Activated T-helper 1 cell treated with anti-CD3 and anti-CD28 coated beads, Interleukin-12 subunit alpha, Interleukin-12 subunit beta, Interleukin-2, Interleukin-4 antibody, amounts not matched to agents 30 ng/mL and 10 ng/mL and 1 ng/mL, durations not matched to agents 14 hours and 24 hours and 36 hours (primary cell): ENCODE measurements at regions of chr3 and their contacts with region 1.

Region 1: DNA sequence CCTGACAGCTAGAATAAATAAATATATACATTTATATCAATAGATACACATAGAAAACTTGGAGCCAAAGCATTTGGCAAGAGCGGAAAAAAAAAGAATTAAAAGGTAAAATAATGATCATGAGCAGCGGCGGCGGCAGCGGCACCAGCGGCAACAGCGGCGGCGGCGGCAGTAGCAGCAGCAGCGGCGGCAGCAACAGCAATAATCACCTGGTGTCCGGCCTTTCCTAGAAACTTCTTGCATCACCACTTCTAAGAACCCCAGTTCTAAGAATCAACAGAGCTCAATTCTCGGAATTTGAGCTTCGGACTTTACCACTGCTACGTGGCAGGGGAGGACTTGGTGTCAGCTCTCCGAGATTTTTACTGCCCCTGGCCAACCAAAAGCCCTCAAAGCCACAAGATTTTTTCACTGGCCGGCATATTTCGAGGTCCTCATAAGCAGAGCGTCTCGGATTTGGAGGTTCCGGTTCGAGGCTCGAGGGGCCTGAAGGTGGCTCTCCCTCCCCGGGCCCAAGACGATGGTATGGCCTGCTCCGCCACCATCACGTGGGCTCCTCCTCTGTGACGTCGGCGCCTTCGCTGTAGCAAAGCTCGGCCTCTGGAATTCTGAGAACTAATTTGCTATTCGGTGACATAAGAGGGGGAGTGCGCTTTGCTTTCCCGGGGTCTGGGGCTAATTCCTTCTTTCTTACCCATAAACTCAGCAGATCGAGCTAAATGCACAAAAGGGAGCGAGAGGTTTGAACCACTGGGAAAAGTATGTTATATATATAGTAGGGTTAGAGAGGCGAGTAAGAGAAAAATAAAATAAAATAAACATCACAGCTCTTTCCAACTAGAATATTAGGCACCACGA is at the start of gene BCL6:
- DNase-seq: peak; percentile 88
- H3K4me3 Mint-ChIP-seq: peak within 1 kb of the TSS; percentile 96
- H3K27ac Mint-ChIP-seq: peak within 1 kb of the TSS; percentile 98
- H3K4me1 Mint-ChIP-seq: peaks cover 73% of the 10 kb centered on the region
- H3K27me3 Mint-ChIP-seq: no peaks in the 10 kb centered on the region
- total RNA-seq, gene BCL6: 38.8 and 42.1 TPM in 2 replicates

Region 2: DNA sequence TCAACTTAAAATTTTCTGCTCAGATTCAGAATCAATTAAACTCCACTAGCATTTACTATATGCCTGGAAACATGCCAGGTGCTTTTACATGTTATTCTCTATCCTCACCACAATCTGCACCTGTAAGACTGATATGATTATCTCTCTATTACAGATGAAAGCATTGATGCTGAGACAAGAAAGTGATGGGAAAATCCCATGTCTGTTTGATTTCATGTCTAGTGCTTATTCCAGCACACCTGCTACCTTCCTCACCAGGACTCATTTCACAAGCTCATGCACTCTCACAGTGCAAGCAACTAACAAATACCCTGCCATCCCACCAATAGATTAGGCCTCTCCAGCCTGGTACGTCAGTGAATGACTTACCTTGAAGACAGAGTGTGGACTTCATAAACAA is 24.8 kb after region 1 on chr3:
- intact Hi-C with region 1: loop called (anchors 1 kb)
- DNase-seq: no peak
- H3K4me3 Mint-ChIP-seq: peak overlapping the region; percentile 12
- H3K27ac Mint-ChIP-seq: peak overlapping the region; percentile 16
- H3K4me1 Mint-ChIP-seq: peaks cover 56% of the 10 kb centered on the region
- H3K27me3 Mint-ChIP-seq: peaks cover 1% of the 10 kb centered on the region

Region 3: DNA sequence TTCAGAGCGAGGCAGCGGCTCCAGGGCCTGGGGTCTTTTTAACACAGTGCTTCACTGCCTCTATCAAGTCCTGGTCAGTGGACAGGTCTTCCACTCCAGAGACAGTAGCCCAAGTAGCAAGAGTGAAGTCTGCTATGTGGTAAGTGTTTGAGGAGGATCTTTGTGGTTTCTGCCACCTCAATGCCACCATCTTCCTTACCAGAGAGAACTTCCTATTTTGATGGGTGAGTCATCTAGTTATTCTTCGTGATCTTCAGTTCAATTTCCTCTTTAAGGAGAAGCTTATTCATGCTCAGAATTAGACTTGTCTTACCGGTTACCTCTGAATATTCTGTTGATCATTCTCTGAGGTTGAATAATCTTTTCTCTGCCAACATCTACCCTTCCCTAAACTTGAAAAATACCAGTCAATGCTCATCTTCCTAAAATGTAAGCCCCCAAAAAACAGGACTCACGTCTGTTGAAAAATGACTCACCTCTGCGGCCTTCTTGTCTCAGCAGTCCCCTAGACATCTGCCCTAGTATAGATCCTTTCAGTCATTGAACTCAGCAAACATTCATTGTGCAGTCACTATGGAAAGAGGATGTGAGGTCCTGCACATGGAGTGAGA is 32.0 kb after region 1 on chr3:
- intact Hi-C with region 1: loop called (anchors 1 kb)
- DNase-seq: peak; percentile 40
- H3K4me3 Mint-ChIP-seq: peak overlapping the region; percentile 32
- H3K27ac Mint-ChIP-seq: peak overlapping the region; percentile 91
- H3K4me1 Mint-ChIP-seq: peaks cover 64% of the 10 kb centered on the region
- H3K27me3 Mint-ChIP-seq: no peaks in the 10 kb centered on the region

Region 4: DNA sequence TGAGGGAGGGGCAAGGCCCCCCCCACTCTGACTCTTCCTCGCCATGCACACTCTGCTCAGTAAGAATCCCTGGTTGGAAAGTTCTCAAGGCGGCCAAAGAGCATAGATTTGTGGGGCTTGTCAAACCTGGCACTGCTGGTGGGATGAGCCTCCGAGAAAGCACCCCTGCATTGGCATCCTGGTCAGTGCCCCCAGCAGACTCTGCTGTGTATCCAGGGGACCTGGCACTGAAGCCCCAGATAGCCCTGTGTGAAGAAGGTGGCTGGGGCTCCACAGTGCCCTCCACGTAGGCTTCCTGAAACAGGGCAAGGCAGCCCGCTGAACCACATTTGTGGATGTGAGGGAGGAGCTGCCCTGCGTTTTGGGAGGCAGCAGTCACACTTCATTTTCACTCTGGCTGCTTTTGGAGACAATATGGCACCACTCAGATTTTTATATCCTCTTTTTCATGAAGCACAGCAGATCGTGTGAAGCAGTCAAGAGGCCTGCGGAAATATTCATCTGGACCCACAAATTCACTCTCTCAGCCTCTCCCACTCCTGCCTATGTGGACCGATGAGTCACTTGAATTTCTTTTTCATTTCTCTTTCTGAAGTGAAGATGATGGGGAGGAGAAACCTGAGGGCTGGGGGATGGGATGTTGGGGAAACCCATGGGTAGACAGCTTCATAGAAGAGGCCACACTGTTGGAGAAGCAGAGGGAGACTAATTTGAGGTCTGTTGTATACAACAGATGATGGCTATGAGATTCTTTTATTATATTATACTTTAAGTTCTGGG is 88.6 kb after region 1 on chr3:
- intact Hi-C with region 1: loop called (anchors 1 kb)
- DNase-seq: no peak
- H3K4me3 Mint-ChIP-seq: no peak overlapping the region
- H3K27ac Mint-ChIP-seq: peak overlapping the region; percentile 26
- H3K4me1 Mint-ChIP-seq: peaks cover 42% of the 10 kb centered on the region
- H3K27me3 Mint-ChIP-seq: no peaks in the 10 kb centered on the region

Region 5: DNA sequence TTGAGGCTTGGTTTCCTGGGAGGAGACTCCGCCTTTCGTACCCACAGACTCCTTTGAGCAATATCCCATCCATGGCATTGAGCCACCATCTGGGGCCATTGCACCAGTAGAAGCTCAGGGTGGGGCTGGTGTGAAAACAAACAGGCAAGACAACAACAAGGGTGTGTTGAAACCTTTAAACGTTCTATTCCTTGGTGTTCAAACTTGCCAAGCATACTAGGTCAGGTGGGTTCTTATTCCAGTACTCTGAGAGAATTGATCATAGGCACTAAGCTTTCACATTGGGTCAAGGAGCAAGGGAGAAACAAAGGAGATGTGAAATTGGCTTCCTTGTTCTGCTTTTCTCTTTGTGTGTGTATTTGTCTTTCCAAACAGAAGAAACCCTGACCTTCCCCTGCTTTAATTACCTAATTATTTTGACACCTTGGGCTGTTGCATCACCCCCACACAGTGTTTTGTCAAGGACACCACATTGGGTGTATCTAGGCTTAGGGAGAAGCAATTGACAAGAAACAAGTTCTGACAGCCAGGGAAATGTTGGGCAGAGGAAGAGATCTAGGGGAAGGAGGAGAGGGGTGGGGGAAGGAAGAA is 105.0 kb after region 1 on chr3:
- intact Hi-C with region 1: loop called (anchors 5 kb)
- DNase-seq: no peak
- H3K4me3 Mint-ChIP-seq: no peak overlapping the region
- H3K27ac Mint-ChIP-seq: no peak overlapping the region
- H3K4me1 Mint-ChIP-seq: peaks cover 28% of the 10 kb centered on the region
- H3K27me3 Mint-ChIP-seq: no peaks in the 10 kb centered on the region

Region 6: GRCh38 chr3:187870360-187871203 is 125.2 kb after region 1 on chr3:
- intact Hi-C with region 1: loop called (anchors 1 kb)
- DNase-seq: no peak
- H3K4me3 Mint-ChIP-seq: peak overlapping the region; percentile 49
- H3K27ac Mint-ChIP-seq: peak overlapping the region; percentile 84
- H3K4me1 Mint-ChIP-seq: peaks cover 32% of the 10 kb centered on the region
- H3K27me3 Mint-ChIP-seq: no peaks in the 10 kb centered on the region

Region 7: DNA sequence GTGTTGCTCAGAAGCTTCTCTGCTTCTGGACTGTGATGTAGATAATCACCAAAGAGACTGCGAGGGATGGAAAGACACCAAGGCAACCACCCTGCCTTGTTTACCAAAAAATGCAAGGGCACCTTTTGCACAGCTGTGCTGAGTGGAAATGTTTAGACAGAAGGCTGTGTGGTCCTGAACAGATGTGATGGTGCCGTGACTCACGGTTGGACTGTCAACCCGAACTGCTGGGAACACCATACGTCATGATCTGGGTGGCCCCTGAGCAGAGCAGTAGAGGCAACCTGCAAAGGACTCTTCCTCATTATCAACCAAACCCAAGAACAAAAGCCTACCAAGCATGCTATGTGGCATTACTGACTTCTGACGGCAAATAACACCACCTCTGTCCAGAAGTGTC is 347.2 kb after region 1 on chr3:
- intact Hi-C with region 1: loop called (anchors 1 kb)
- DNase-seq: no peak
- H3K4me3 Mint-ChIP-seq: no peak overlapping the region
- H3K27ac Mint-ChIP-seq: peak overlapping the region; percentile 49
- H3K4me1 Mint-ChIP-seq: peaks cover 14% of the 10 kb centered on the region
- H3K27me3 Mint-ChIP-seq: peaks cover 2% of the 10 kb centered on the region